A673 (cell line): ENCODE measurements at regions of chr3 and their contacts with region 1.

Region 1: GRCh38 chr3:107235928-107236315 is 141.3 kb upstream of the CCDC54 start:
- DNase-seq: peak; percentile 86
- H3K4me3 ChIP-seq: peak overlapping the region; percentile 50
- H3K27ac ChIP-seq: peak overlapping the region; percentile 7
- H3K4me1 ChIP-seq: peaks cover 4% of the 10 kb centered on the region
- H3K27me3 ChIP-seq: no peaks in the 10 kb centered on the region
- CTCF ChIP-seq: peak; percentile 95

Region 2: DNA sequence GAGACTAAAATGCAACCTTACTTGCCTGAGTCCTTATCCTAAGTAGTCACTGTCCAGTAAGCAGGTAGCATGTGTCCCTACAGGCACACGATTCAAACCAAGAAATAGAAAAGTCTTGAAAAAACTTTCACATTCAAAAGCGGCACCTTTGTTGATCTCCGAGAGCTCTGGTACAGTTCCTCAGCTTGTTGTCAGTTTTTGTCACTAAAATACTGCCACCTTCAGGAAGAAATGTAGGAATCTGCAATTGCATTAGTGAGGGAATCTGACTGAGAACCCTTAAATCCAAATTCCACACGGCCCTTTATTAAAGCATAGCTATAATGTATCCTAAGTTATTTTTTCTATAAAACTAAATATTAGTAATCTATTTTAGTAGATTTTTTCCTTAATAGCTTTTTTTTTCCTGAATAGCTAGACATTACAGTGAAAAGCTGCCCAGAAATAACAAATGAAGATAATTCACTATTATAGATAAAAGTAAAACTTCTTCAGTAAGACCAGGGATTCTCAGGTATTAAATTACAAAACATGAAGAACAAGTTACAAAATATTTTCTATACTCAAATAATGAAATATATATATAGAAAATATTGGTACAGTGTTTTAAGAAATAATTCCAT is 185.4 kb after region 1 on chr3:
- CTCF ChIA-PET with region 1: interaction called, 6 read pairs
- POLR2A ChIA-PET with region 1: no interaction called
- intact Hi-C with region 1: loop called (anchors 5 kb)
- DNase-seq: peak; percentile 77
- H3K4me3 ChIP-seq: peak overlapping the region; percentile 18
- H3K27ac ChIP-seq: no peak overlapping the region
- H3K4me1 ChIP-seq: no peaks in the 10 kb centered on the region
- H3K27me3 ChIP-seq: no peaks in the 10 kb centered on the region
- CTCF ChIP-seq: peak; percentile 77

Region 3: GRCh38 chr3:107660306-107660976 is 424.5 kb after region 1 on chr3:
- CTCF ChIA-PET with region 1: interaction called, 3 read pairs
- POLR2A ChIA-PET with region 1: no interaction called
- intact Hi-C with region 1: loop called (anchors 5 kb)
- DNase-seq: peak; percentile 60
- H3K4me3 ChIP-seq: no peak overlapping the region
- H3K27ac ChIP-seq: no peak overlapping the region
- H3K4me1 ChIP-seq: peaks cover 18% of the 10 kb centered on the region
- H3K27me3 ChIP-seq: no peaks in the 10 kb centered on the region
- CTCF ChIP-seq: peak; percentile 84

Region 4: GRCh38 chr3:107846279-107846852 is 610.4 kb after region 1 on chr3:
- CTCF ChIA-PET with region 1: interaction called, 3 read pairs
- POLR2A ChIA-PET with region 1: no interaction called
- intact Hi-C with region 1: loop called (anchors 1 kb)
- DNase-seq: peak; percentile 69
- H3K4me3 ChIP-seq: no peak overlapping the region
- H3K27ac ChIP-seq: no peak overlapping the region
- H3K4me1 ChIP-seq: no peaks in the 10 kb centered on the region
- H3K27me3 ChIP-seq: peaks cover 23% of the 10 kb centered on the region
- CTCF ChIP-seq: peak; percentile 80

Region 5: GRCh38 chr3:108477511-108478147 is 1241.7 kb after region 1 on chr3:
- CTCF ChIA-PET with region 1: interaction called, 5 read pairs
- POLR2A ChIA-PET with region 1: no interaction called
- intact Hi-C with region 1: loop called (anchors 10 kb)
- DNase-seq: peak; percentile 84
- H3K4me3 ChIP-seq: no peak overlapping the region
- H3K27ac ChIP-seq: no peak overlapping the region
- H3K4me1 ChIP-seq: peaks cover 8% of the 10 kb centered on the region
- H3K27me3 ChIP-seq: no peaks in the 10 kb centered on the region
- CTCF ChIP-seq: peak; percentile 80